IMR-90 (cell line): ENCODE measurements at regions of chr17 and their contacts with region 1.

Region 1: GRCh38 chr17:2482218-2482617 is 29.5 kb downstream of the METTL16 start:
- DNase-seq: no peak
- ATAC-seq: no peak
- H3K4me3 ChIP-seq: no peak overlapping the region
- H3K27ac ChIP-seq: no peak overlapping the region
- H3K4me1 ChIP-seq: peaks cover 6% of the 10 kb centered on the region; the same call in 1 of the 2 replicates
- H3K27me3 ChIP-seq: no peaks in the 10 kb centered on the region
- CTCF ChIP-seq: no peak
- POLR2A ChIP-seq: no peak
- RAD21 ChIP-seq: no peak

Region 2: GRCh38 chr17:2468270-2468669 is 13.9 kb before region 1 on chr17:
- CTCF ChIA-PET with region 1: no interaction called
- POLR2A ChIA-PET with region 1: no interaction called
- dilution Hi-C with region 1: no loop called
- in situ Hi-C with region 1: no loop called
- intact Hi-C with region 1: loop called (anchors 1 kb)
- DNase-seq: peak; percentile 99
- ATAC-seq: peak; percentile 92
- H3K4me3 ChIP-seq: no peak overlapping the region
- H3K27ac ChIP-seq: no peak overlapping the region
- H3K4me1 ChIP-seq: peaks cover 2% of the 10 kb centered on the region; the same call in 1 of the 2 replicates
- H3K27me3 ChIP-seq: no peaks in the 10 kb centered on the region
- CTCF ChIP-seq: no peak
- POLR2A ChIP-seq: no peak
- RAD21 ChIP-seq: no peak; the same call in 1 of the 2 replicates